ENCODE measurements at regions of chr6 and their contacts with region 1.

Region 1: GRCh38 chr6:52419809-52420670 is at the start of gene EFHC1:
- DNase-seq: peak; percentile 97
- ATAC-seq: peak; percentile 93
- H3K4me3 ChIP-seq: peak within 1 kb of the TSS; percentile 65
- H3K27ac ChIP-seq: peak within 1 kb of the TSS; percentile 95
- H3K4me1 ChIP-seq: peaks cover 17% of the 10 kb centered on the region
- H3K27me3 ChIP-seq: no peaks in the 10 kb centered on the region
- CTCF ChIP-seq: no peak
- POLR2A ChIP-seq: peak; percentile 91
- RAD21 ChIP-seq: no peak
- total RNA-seq, gene EFHC1: 14.0 and 14.7 TPM in 2 replicates

Region 2: GRCh38 chr6:52227495-52227894 is 192.5 kb before region 1 on chr6:
- CTCF ChIA-PET with region 1: no interaction called
- POLR2A ChIA-PET with region 1: no interaction called
- dilution Hi-C with region 1: no loop called
- in situ Hi-C with region 1: no loop called
- intact Hi-C with region 1: no loop called
- DNase-seq: peak; percentile 1
- ATAC-seq: no peak
- H3K4me3 ChIP-seq: no peak overlapping the region
- H3K27ac ChIP-seq: no peak overlapping the region
- H3K4me1 ChIP-seq: no peaks in the 10 kb centered on the region
- H3K27me3 ChIP-seq: peaks cover 7% of the 10 kb centered on the region; the same call in 1 of the 2 replicates
- CTCF ChIP-seq: no peak
- POLR2A ChIP-seq: no peak
- RAD21 ChIP-seq: no peak

Region 3: DNA sequence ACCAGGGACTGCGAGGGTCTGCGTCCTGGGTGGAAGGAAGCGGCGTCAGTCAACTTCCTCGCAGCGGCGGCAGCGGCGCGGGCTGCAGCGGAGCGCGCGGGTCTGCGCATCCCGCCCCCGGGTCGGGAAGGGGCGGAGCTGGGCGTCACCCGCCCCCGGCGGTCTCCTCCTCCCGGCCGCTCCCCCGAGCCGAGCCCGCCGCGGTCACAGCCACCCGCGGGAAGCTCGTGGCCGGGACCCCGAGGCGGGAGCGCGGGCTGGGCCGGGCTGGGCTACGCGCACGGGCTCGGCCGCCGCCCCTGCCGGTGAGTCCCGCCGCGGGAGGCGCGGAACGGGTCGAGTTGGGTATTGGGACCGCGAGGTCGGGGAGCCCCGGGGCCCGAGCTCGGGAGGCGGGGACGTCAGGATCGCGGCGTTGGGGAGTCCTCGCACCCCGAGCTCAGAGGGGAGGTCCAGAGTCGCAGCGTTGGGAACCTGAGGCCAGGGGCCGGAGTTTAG is 58.0 kb before region 1 on chr6 and contains the start of gene PAQR8:
- CTCF ChIA-PET with region 1: no interaction called
- POLR2A ChIA-PET with region 1: no interaction called
- dilution Hi-C with region 1: no loop called
- in situ Hi-C with region 1: no loop called
- intact Hi-C with region 1: no loop called
- DNase-seq: peak; percentile 51
- ATAC-seq: peak; percentile 96
- H3K4me3 ChIP-seq: peak within 1 kb of the TSS; percentile 86
- H3K27ac ChIP-seq: peak within 1 kb of the TSS; percentile 75
- H3K4me1 ChIP-seq: peaks cover 15% of the 10 kb centered on the region
- H3K27me3 ChIP-seq: no peaks in the 10 kb centered on the region
- CTCF ChIP-seq: no peak
- POLR2A ChIP-seq: no peak
- RAD21 ChIP-seq: no peak
- total RNA-seq, gene PAQR8: 1.6 and 1.7 TPM in 2 replicates

Region 4: GRCh38 chr6:52474173-52474572 is 54.1 kb after region 1 on chr6:
- CTCF ChIA-PET with region 1: interaction called, 3 read pairs
- POLR2A ChIA-PET with region 1: no interaction called
- dilution Hi-C with region 1: no loop called
- in situ Hi-C with region 1: no loop called
- intact Hi-C with region 1: loop called (anchors 5 kb)
- DNase-seq: no peak
- ATAC-seq: no peak
- H3K4me3 ChIP-seq: no peak overlapping the region
- H3K27ac ChIP-seq: no peak overlapping the region
- H3K4me1 ChIP-seq: no peaks in the 10 kb centered on the region
- H3K27me3 ChIP-seq: no peaks in the 10 kb centered on the region
- CTCF ChIP-seq: no peak
- POLR2A ChIP-seq: no peak
- RAD21 ChIP-seq: no peak

Region 5: GRCh38 chr6:52517502-52518278 is 97.7 kb after region 1 on chr6:
- CTCF ChIA-PET with region 1: no interaction called
- POLR2A ChIA-PET with region 1: no interaction called
- dilution Hi-C with region 1: no loop called
- in situ Hi-C with region 1: no loop called
- intact Hi-C with region 1: loop called (anchors 5 kb)
- DNase-seq: peak; percentile 98
- ATAC-seq: peak; percentile 74
- H3K4me3 ChIP-seq: no peak overlapping the region
- H3K27ac ChIP-seq: peak overlapping the region; percentile 90
- H3K4me1 ChIP-seq: peaks cover 48% of the 10 kb centered on the region
- H3K27me3 ChIP-seq: no peaks in the 10 kb centered on the region
- CTCF ChIP-seq: no peak
- POLR2A ChIP-seq: peak; percentile 72
- RAD21 ChIP-seq: peak; percentile 30; the same call in 1 of the 2 replicates

Region 6: GRCh38 chr6:52598123-52598823 is 178.2 kb after region 1 on chr6:
- CTCF ChIA-PET with region 1: interaction called, 4 read pairs
- POLR2A ChIA-PET with region 1: no interaction called
- dilution Hi-C with region 1: no loop called
- in situ Hi-C with region 1: loop called (anchors 5 kb)
- intact Hi-C with region 1: loop called (anchors 1 kb)
- DNase-seq: peak; percentile 74
- ATAC-seq: peak; percentile 8; the same call in 1 of the 2 replicates
- H3K4me3 ChIP-seq: no peak overlapping the region
- H3K27ac ChIP-seq: peak overlapping the region; percentile 3; the same call in 1 of the 2 replicates
- H3K4me1 ChIP-seq: peaks cover 25% of the 10 kb centered on the region
- H3K27me3 ChIP-seq: no peaks in the 10 kb centered on the region
- CTCF ChIP-seq: peak; percentile 73
- POLR2A ChIP-seq: no peak
- RAD21 ChIP-seq: peak; percentile 71

Region 7: GRCh38 chr6:52724406-52725121 is 304.5 kb after region 1 on chr6:
- CTCF ChIA-PET with region 1: no interaction called
- POLR2A ChIA-PET with region 1: no interaction called
- dilution Hi-C with region 1: no loop called
- in situ Hi-C with region 1: no loop called
- intact Hi-C with region 1: no loop called
- DNase-seq: peak; percentile 60
- ATAC-seq: peak; percentile 85
- H3K4me3 ChIP-seq: no peak overlapping the region
- H3K27ac ChIP-seq: no peak overlapping the region
- H3K4me1 ChIP-seq: no peaks in the 10 kb centered on the region; the same call in 1 of the 2 replicates
- H3K27me3 ChIP-seq: no peaks in the 10 kb centered on the region; the same call in 1 of the 2 replicates
- CTCF ChIP-seq: peak; percentile 65
- POLR2A ChIP-seq: no peak
- RAD21 ChIP-seq: peak; percentile 55

Region 8: DNA sequence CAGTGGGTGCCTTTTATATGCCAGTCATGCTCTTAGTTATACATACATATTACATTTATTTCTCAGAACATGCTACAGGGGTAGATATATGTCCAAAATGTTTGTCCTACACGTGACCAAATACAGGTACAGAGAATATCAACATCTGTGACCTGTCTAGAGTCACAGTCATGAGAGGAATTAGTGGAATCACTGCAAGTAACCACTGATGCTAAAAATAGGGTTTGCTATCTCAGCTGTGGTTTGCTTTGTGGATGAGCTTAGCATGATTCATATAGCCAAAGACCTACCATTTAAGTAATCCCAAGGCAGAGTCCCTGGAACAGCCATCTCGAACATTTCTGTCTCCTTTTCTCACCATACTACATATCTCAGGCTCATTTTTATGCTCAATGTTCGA is 457.1 kb after region 1 on chr6:
- CTCF ChIA-PET with region 1: no interaction called
- POLR2A ChIA-PET with region 1: no interaction called
- dilution Hi-C with region 1: no loop called
- in situ Hi-C with region 1: no loop called
- intact Hi-C with region 1: loop called (anchors 2 kb)
- DNase-seq: peak; percentile 96
- ATAC-seq: peak; percentile 90
- H3K4me3 ChIP-seq: no peak overlapping the region
- H3K27ac ChIP-seq: no peak overlapping the region
- H3K4me1 ChIP-seq: peaks cover 17% of the 10 kb centered on the region
- H3K27me3 ChIP-seq: no peaks in the 10 kb centered on the region
- CTCF ChIP-seq: no peak
- POLR2A ChIP-seq: no peak
- RAD21 ChIP-seq: no peak

Region 9: GRCh38 chr6:53199156-53199555 is 779.1 kb after region 1 on chr6:
- CTCF ChIA-PET with region 1: no interaction called
- POLR2A ChIA-PET with region 1: no interaction called
- dilution Hi-C with region 1: no loop called
- in situ Hi-C with region 1: no loop called
- intact Hi-C with region 1: no loop called
- DNase-seq: no peak
- ATAC-seq: no peak
- H3K4me3 ChIP-seq: no peak overlapping the region
- H3K27ac ChIP-seq: no peak overlapping the region
- H3K4me1 ChIP-seq: no peaks in the 10 kb centered on the region
- H3K27me3 ChIP-seq: peaks cover 7% of the 10 kb centered on the region
- CTCF ChIP-seq: no peak
- POLR2A ChIP-seq: no peak
- RAD21 ChIP-seq: no peak

Measured in IMR-90 (cell line).